Left ventricle myocardium superior (tissue), 1 donor: ENCODE measurements at regions of chr1 and their contacts with region 1.

Region 1: GRCh38 chr1:197356723-197357533 is 88.9 kb downstream of the CRB1 start:
- DNase-seq: no peak
- ATAC-seq: peak; percentile 49

Region 2: GRCh38 chr1:197178998-197179397 is 177.9 kb before region 1 on chr1:
- intact Hi-C with region 1: loop called (anchors 10 kb)
- DNase-seq: no peak
- ATAC-seq: no peak

Region 3: DNA sequence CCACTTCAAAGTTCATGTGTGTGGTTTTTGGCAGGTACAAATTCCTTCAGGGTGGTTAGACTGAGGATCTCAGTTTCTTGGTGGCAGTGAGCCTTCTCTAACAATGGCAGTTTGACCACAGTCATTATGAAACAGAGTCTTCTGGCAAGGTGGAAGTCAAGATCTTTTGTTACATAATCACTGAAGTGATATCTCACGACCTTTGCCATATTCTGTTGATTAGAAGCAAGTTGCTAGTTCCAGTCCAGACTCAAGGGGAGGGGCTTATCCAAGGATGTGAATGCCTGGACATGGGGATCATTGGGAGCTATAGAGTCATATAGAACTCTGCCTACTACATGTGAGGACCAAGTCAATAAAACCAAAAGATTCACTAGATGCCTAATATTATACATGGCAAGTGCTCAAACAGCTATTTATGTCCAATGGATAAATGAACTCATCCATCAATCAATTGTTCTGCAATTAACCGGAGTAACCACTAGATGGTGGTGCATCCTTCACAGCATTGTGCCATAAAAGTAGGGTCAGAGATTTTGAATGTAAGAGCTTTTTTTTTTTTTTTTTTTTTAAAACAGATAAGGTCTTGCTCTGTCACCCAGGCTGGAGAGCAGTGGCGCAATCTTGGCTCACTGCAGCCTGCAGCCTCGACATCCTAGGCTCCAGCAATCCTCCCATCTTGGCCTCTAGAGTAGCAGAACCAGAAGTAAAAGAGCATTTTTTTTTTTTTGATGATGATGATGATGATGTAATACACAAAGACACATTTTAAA is 43.0 kb after region 1 on chr1:
- intact Hi-C with region 1: no loop called
- DNase-seq: no peak
- ATAC-seq: no peak